ENCODE measurements at regions of chrX and their contacts with region 1.

Region 1: DNA sequence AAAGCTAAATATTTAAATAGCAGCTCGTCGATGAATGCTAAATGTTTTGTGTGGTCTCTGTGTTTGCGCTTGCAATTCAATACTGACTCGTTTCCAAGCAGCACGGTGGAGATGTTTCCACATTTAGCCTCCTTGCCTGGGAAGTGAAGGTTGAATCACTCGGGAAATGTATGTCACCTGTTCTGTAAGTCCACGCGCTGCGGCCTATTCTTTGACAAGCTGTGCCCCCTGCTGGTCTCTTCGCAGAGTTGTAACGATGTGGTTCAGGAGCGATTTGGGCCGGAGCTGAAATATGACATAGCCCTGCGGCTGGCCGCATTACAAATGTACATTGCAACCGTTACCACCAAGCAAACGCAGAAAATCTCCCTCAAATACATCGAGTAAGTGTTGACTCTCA is 89.6 kb upstream of the PRPS2 start:
- DNase-seq: peak; percentile 50
- H3K4me3 ChIP-seq: no peak overlapping the region
- H3K27ac ChIP-seq: no peak overlapping the region
- H3K4me1 ChIP-seq: no peaks in the 10 kb centered on the region
- H3K27me3 ChIP-seq: no peaks in the 10 kb centered on the region; the same call in 1 of the 2 replicates
- CTCF ChIP-seq: peak; percentile 73
- EP300 ChIP-seq: no peak
- RAD21 ChIP-seq: peak; percentile 77

Region 2: DNA sequence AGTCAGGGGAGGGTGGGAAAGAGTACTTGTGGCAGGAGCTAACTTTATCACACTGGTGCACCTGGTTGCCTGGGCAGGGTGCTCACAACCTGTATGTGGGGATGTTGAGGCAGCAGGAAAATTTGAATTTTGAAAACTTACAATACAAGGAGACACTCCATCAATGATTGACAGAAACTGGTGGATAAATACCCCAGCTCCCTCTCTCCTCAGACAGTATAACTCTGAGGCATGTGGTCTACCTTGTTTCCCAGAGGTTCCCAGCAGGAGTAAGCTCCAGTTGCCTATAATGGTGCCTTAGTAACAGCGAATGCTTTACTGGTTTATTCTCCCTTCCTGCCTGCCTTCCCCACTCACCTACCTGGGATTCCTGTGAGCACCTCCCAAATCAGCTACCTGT is 22.1 kb before region 1 on chrX:
- CTCF ChIA-PET with region 1: interaction called, 10 read pairs
- POLR2A ChIA-PET with region 1: no interaction called
- DNase-seq: no peak
- H3K4me3 ChIP-seq: no peak overlapping the region
- H3K27ac ChIP-seq: no peak overlapping the region
- H3K4me1 ChIP-seq: no peaks in the 10 kb centered on the region
- H3K27me3 ChIP-seq: peaks cover 6% of the 10 kb centered on the region; the same call in 1 of the 2 replicates
- CTCF ChIP-seq: no peak
- EP300 ChIP-seq: no peak
- RAD21 ChIP-seq: no peak

Region 3: DNA sequence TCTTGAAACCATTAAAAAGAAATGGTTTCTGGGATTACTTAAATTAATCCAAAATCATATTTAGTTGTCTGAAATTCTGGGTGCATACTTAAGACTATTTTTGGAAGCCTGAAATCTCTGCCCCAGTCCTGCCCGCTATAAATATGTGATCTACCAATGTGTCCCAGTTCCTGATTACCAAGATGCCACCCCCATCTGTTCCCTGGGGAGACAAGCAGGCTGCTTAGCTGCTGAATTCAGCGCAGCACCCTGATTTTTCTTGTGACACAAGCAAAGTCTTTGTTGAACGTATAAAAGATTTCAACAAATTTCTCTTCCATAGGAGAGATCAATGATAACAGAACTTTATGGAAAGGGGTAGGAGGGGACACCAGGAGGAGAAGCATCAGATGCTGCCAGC is 11.0 kb before region 1 on chrX:
- CTCF ChIA-PET with region 1: interaction called, 18 read pairs
- POLR2A ChIA-PET with region 1: no interaction called
- DNase-seq: no peak
- H3K4me3 ChIP-seq: no peak overlapping the region
- H3K27ac ChIP-seq: no peak overlapping the region
- H3K4me1 ChIP-seq: no peaks in the 10 kb centered on the region
- H3K27me3 ChIP-seq: peaks cover 2% of the 10 kb centered on the region; the same call in 1 of the 2 replicates
- CTCF ChIP-seq: no peak
- EP300 ChIP-seq: no peak
- RAD21 ChIP-seq: no peak

Region 4: GRCh38 chrX:12721042-12721441 is 19.4 kb after region 1 on chrX:
- CTCF ChIA-PET with region 1: interaction called, 18 read pairs
- POLR2A ChIA-PET with region 1: no interaction called
- DNase-seq: no peak
- H3K4me3 ChIP-seq: no peak overlapping the region
- H3K27ac ChIP-seq: no peak overlapping the region
- H3K4me1 ChIP-seq: no peaks in the 10 kb centered on the region
- H3K27me3 ChIP-seq: no peaks in the 10 kb centered on the region
- CTCF ChIP-seq: no peak
- EP300 ChIP-seq: no peak
- RAD21 ChIP-seq: no peak

Region 5: GRCh38 chrX:12771445-12772069 is 69.9 kb after region 1 on chrX:
- CTCF ChIA-PET with region 1: interaction called, 13 read pairs
- POLR2A ChIA-PET with region 1: no interaction called
- DNase-seq: peak; percentile 25
- H3K4me3 ChIP-seq: no peak overlapping the region
- H3K27ac ChIP-seq: no peak overlapping the region
- H3K4me1 ChIP-seq: peaks cover 0 to 6% of the 10 kb centered on the region in 2 experiments; a peak in 1 of 4 replicates
- H3K27me3 ChIP-seq: peaks cover 35% of the 10 kb centered on the region; the same call in 1 of the 2 replicates
- CTCF ChIP-seq: peak; percentile 45
- EP300 ChIP-seq: no peak
- RAD21 ChIP-seq: no peak

Region 6: GRCh38 chrX:13110433-13111324 is 409.1 kb after region 1 on chrX:
- CTCF ChIA-PET with region 1: no interaction called
- POLR2A ChIA-PET with region 1: no interaction called
- DNase-seq: peak; percentile 4
- H3K4me3 ChIP-seq: no peak overlapping the region
- H3K27ac ChIP-seq: peak overlapping the region; percentile 71 to 94
- H3K4me1 ChIP-seq: peaks cover 0 to 13% of the 10 kb centered on the region in 2 experiments; a peak in 2 of 4 replicates
- H3K27me3 ChIP-seq: no peaks in the 10 kb centered on the region
- CTCF ChIP-seq: no peak
- EP300 ChIP-seq: peak in 1 of 2 experiments; percentile 92; a peak in 3 of 4 replicates
- RAD21 ChIP-seq: no peak

Measured in SK-N-SH (cell line).